PC-9 (cell line): ENCODE measurements at regions of chr16 and their contacts with region 1.

Region 1: GRCh38 chr16:28553776-28554633 is at the start of gene SGF29:
- DNase-seq: peak; percentile 72 to 94
- H3K4me3 ChIP-seq: peak within 1 kb of the TSS; percentile 74
- H3K27ac ChIP-seq: peak within 1 kb of the TSS; percentile 93
- H3K4me1 ChIP-seq: peaks cover 16% of the 10 kb centered on the region
- H3K27me3 ChIP-seq: no peaks in the 10 kb centered on the region
- CTCF ChIP-seq: peak; percentile 36; the same call in 1 of the 2 replicates
- total RNA-seq, gene SGF29: 45.3 and 51.1 TPM in 2 replicates

Region 2: GRCh38 chr16:28326944-28327610 is 226.9 kb before region 1 on chr16:
- CTCF ChIA-PET with region 1: interaction called, 8 read pairs
- POLR2A ChIA-PET with region 1: no interaction called
- intact Hi-C with region 1: loop called (anchors 1 kb)
- DNase-seq: peak; percentile 56 to 68
- H3K4me3 ChIP-seq: no peak overlapping the region
- H3K27ac ChIP-seq: no peak overlapping the region
- H3K4me1 ChIP-seq: no peaks in the 10 kb centered on the region; the same call in 1 of the 2 replicates
- H3K27me3 ChIP-seq: no peaks in the 10 kb centered on the region
- CTCF ChIP-seq: peak; percentile 79

Region 3: DNA sequence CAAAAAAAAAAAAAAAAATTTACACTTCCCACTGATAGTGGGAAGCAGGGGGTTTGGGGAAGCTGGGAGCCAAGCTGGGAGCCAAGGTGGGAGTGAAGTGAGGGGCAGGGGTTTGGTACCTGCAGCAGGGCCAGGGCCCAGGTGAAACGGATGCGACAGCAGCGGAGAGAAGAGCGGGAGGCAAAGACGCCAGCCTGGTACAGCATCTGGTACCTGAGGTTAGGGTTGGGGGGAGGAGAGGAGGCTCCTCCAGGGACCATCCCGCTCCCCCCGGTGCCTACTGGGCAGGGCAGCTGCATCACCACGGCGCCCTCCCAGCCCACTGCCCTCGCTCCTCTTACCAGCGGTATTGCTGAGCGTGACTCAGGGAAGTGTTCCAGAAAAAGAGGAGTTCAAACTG is 72.0 kb before region 1 on chr16:
- CTCF ChIA-PET with region 1: no interaction called
- POLR2A ChIA-PET with region 1: no interaction called
- intact Hi-C with region 1: no loop called
- DNase-seq: no peak
- H3K4me3 ChIP-seq: no peak overlapping the region
- H3K27ac ChIP-seq: no peak overlapping the region
- H3K4me1 ChIP-seq: no peaks in the 10 kb centered on the region
- H3K27me3 ChIP-seq: no peaks in the 10 kb centered on the region
- CTCF ChIP-seq: no peak

Region 4: GRCh38 chr16:28597692-28598261 is 43.8 kb after region 1 on chr16:
- CTCF ChIA-PET with region 1: interaction called, 3 read pairs
- POLR2A ChIA-PET with region 1: interaction called, 12 read pairs
- intact Hi-C with region 1: loop called (anchors 5 kb)
- DNase-seq: peak; percentile 68 to 70
- H3K4me3 ChIP-seq: peak overlapping the region; percentile 36; the same call in 1 of the 2 replicates
- H3K27ac ChIP-seq: peak overlapping the region; percentile 94
- H3K4me1 ChIP-seq: peaks cover 34% of the 10 kb centered on the region
- H3K27me3 ChIP-seq: no peaks in the 10 kb centered on the region
- CTCF ChIP-seq: peak; percentile 34; the same call in 1 of the 2 replicates

Region 5: DNA sequence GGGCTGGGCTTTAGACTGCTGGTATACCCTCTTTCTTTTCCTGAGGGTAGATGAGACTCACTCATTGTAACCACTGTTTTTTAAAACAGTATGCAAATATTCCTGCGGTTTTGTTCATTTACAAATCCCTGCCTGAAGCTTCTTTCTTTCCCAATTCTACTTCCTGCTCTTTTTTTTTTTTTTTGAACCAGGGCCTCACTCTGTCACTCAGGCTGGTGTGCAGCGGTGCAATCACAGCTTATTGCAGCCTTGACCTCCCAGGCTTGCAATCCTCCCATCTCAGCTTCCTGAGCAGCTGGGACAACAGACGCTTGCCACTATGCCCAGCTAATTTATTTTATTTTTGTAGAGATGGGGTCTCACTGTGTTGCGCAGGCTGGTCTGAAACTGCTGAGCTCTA is 63.9 kb after region 1 on chr16:
- CTCF ChIA-PET with region 1: interaction called, 3 read pairs
- POLR2A ChIA-PET with region 1: no interaction called
- intact Hi-C with region 1: loop called (anchors 5 kb)
- DNase-seq: peak in 1 of 2 experiments; percentile 87
- H3K4me3 ChIP-seq: no peak overlapping the region
- H3K27ac ChIP-seq: peak overlapping the region; percentile 54
- H3K4me1 ChIP-seq: peaks cover 33% of the 10 kb centered on the region
- H3K27me3 ChIP-seq: no peaks in the 10 kb centered on the region
- CTCF ChIP-seq: no peak